ENCODE measurements at regions of chr1 and their contacts with region 1.

Region 1: GRCh38 chr1:154955718-154956543 is at the start of gene PBXIP1:
- DNase-seq: peak; percentile 87 to 92
- H3K4me3 ChIP-seq: peak within 1 kb of the TSS; percentile 43
- H3K4me3 Mint-ChIP-seq: peak within 1 kb of the TSS; percentile 80
- H3K27ac Mint-ChIP-seq: peak within 1 kb of the TSS; percentile 79
- H3K4me1 ChIP-seq: peaks cover 15% of the 10 kb centered on the region
- H3K4me1 Mint-ChIP-seq: peaks cover 16% of the 10 kb centered on the region
- H3K27me3 ChIP-seq: no peaks in the 10 kb centered on the region
- H3K27me3 Mint-ChIP-seq: no peaks in the 10 kb centered on the region
- CTCF ChIP-seq: peak in 1 of 2 experiments; percentile 29
- total RNA-seq, gene PBXIP1: 24.0 and 24.6 TPM in 2 replicates

Region 2: DNA sequence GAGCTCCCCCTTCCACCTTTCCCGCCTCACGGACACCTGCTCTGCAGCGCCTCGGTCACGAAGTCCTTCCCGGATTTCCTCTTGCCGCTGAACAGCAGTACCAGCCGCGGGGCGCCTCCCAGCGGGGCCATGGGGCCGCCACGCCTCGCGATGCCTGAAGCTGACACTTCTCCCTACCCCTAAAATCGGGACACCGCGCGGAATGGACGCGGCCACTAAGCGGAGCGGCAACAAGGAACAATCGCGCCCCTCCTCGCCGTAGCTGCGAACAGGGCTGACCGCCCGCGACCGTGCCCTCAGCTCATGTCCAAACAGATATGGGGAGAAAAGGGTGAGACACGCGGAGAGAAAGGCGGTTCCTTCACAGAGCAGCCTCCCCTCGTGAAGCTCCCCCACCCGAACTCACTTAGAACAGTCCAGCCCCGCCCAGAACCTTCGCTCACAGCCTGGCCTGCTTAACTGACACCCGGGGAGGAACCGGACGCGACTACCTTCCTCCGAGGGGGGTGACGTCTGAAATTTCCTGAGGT is 19.3 kb before region 1 on chr1 and contains the start of gene PMVK:
- CTCF ChIA-PET with region 1: interaction called, 8 read pairs
- POLR2A ChIA-PET with region 1: interaction called, 19 read pairs
- intact Hi-C with region 1: no loop called
- DNase-seq: peak; percentile 97 to 98
- H3K4me3 ChIP-seq: peak within 1 kb of the TSS; percentile 72
- H3K4me3 Mint-ChIP-seq: peak within 1 kb of the TSS; percentile 87
- H3K27ac Mint-ChIP-seq: peak within 1 kb of the TSS; percentile 99
- H3K4me1 ChIP-seq: peaks cover 6% of the 10 kb centered on the region
- H3K4me1 Mint-ChIP-seq: peaks cover 17% of the 10 kb centered on the region
- H3K27me3 ChIP-seq: no peaks in the 10 kb centered on the region
- H3K27me3 Mint-ChIP-seq: no peaks in the 10 kb centered on the region
- CTCF ChIP-seq: peak in 1 of 2 experiments; percentile 62
- total RNA-seq, gene PMVK: 25.1 and 25.2 TPM in 2 replicates